MCF 10A (cell line): ENCODE measurements at regions of chr10 and their contacts with region 1.

Region 1: DNA sequence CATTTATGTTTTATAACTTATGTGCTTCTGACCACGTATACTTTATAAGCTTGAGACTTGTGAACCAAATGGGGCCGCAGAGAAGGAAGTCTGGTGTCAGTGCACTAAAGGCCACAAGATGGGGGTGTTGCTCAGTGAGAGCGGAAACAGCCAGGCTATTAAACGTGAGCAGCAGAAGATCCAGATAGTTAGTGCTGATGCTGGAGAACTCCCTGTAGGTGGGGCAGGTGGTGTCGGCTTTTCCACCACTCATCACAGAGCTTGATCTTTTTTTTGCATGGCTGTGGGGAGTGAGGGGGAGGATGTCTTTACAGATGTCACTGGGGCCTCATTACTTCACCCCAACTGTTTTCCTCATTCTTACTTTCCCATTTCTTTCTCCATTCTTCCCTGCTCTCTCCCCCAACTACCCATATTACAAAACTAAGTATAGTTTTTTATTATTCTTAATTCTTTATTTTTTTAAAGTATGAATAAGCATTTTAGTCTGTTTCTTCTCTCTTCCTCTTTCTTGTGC is 34.7 kb downstream of the ACADSB start:
- DNase-seq: peak; percentile 79
- H3K4me3 Mint-ChIP-seq: no peak overlapping the region
- H3K27ac Mint-ChIP-seq: no peak overlapping the region
- H3K4me1 Mint-ChIP-seq: no peaks in the 10 kb centered on the region
- H3K27me3 Mint-ChIP-seq: no peaks in the 10 kb centered on the region
- CTCF ChIP-seq: peak; percentile 86

Region 2: DNA sequence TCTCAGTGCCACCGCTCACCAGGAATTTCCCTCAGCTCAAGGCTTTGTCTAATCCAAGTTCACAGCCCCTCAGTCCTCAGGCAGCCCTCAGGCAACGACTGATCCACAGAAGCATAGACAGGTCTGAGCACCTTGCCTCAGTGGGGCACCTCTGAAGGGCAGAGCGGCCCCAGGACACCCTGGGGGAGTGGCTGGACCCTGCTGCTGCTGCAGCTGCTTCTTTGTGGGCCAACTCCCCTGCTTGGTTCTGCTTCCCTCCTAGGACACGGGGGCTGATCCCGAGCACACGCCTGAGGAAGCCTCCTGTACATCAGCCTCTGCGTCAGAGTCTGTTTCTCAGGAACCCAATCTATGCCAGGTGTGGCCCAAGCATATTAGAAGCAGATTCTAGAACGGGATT is 214.0 kb before region 1 on chr10:
- CTCF ChIA-PET with region 1: no interaction called
- POLR2A ChIA-PET with region 1: no interaction called
- intact Hi-C with region 1: no loop called
- DNase-seq: no peak
- H3K4me3 Mint-ChIP-seq: no peak overlapping the region
- H3K27ac Mint-ChIP-seq: no peak overlapping the region
- H3K4me1 Mint-ChIP-seq: no peaks in the 10 kb centered on the region
- H3K27me3 Mint-ChIP-seq: peaks cover 45% of the 10 kb centered on the region
- CTCF ChIP-seq: no peak

Region 3: DNA sequence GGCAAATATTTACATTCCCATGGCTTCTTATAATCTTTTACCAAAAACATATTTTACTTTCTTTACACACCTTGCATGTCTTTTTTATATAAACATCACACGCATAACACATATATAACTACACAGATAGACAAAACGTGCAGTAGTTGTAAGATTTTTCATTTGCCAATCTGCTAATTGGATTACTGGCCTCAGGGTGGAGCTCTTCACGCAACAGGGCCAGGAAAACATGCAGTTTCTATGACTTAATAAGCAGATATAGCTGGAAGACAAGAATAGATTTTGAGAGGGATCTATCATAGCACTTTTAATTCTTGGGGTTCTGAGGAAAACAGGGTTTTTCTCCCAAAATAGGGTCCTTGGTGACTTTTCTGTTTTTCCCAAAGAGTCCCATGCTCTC is 21.9 kb before region 1 on chr10:
- CTCF ChIA-PET with region 1: interaction called, 18 read pairs
- POLR2A ChIA-PET with region 1: interaction called, 6 read pairs
- intact Hi-C with region 1: no loop called
- DNase-seq: peak; percentile 23
- H3K4me3 Mint-ChIP-seq: no peak overlapping the region
- H3K27ac Mint-ChIP-seq: no peak overlapping the region
- H3K4me1 Mint-ChIP-seq: peaks cover 7% of the 10 kb centered on the region
- H3K27me3 Mint-ChIP-seq: no peaks in the 10 kb centered on the region
- CTCF ChIP-seq: peak; percentile 28

Region 4: DNA sequence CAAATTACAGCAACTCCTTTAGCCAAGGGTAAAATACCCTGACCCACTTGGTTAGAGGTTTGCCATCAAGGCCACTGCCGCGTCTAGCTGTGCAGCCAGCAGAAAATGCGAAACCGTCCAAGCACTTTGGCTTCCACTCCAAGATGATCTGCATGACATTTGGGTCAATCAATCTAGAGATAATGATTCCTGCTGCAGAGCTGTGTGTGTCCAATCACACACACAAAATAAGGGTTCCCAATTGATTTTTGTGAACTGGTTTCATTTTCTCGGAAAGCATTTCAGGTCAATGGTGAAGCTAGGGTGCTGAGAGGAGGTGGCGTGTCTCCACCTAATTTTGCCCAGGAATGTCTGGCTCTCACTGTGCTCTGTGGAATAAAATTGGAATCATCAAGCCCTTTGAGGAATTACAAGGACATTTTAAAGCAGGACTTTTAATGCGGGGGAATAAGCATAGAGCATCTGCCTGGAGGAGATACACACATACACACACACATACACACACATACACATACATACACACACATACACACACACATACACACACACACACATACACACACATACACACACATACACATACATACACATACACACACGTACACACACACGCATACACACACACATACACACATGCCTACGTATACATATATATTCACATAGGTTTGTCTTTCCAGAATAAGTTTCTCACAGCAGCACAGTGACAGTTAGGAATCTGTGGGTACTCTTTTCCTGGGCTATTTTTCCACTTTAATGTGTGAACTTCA is 24.8 kb after region 1 on chr10:
- CTCF ChIA-PET with region 1: interaction called, 13 read pairs
- POLR2A ChIA-PET with region 1: interaction called, 3 read pairs
- intact Hi-C with region 1: no loop called
- DNase-seq: no peak
- H3K4me3 Mint-ChIP-seq: no peak overlapping the region
- H3K27ac Mint-ChIP-seq: no peak overlapping the region
- H3K4me1 Mint-ChIP-seq: no peaks in the 10 kb centered on the region
- H3K27me3 Mint-ChIP-seq: peaks cover 28% of the 10 kb centered on the region
- CTCF ChIP-seq: no peak

Region 5: GRCh38 chr10:123380497-123381085 is 337.1 kb after region 1 on chr10:
- CTCF ChIA-PET with region 1: interaction called, 51 read pairs
- POLR2A ChIA-PET with region 1: interaction called, 10 read pairs
- intact Hi-C with region 1: loop called (anchors 1 kb)
- DNase-seq: peak; percentile 33
- H3K4me3 Mint-ChIP-seq: no peak overlapping the region
- H3K27ac Mint-ChIP-seq: no peak overlapping the region
- H3K4me1 Mint-ChIP-seq: peaks cover 18% of the 10 kb centered on the region
- H3K27me3 Mint-ChIP-seq: no peaks in the 10 kb centered on the region
- CTCF ChIP-seq: peak; percentile 41

Region 6: GRCh38 chr10:123537188-123537961 is 493.9 kb after region 1 on chr10:
- CTCF ChIA-PET with region 1: interaction called, 10 read pairs
- POLR2A ChIA-PET with region 1: no interaction called
- intact Hi-C with region 1: no loop called
- DNase-seq: no peak
- H3K4me3 Mint-ChIP-seq: no peak overlapping the region
- H3K27ac Mint-ChIP-seq: peak overlapping the region; percentile 84
- H3K4me1 Mint-ChIP-seq: peaks cover 14% of the 10 kb centered on the region
- H3K27me3 Mint-ChIP-seq: no peaks in the 10 kb centered on the region
- CTCF ChIP-seq: no peak

Region 7: GRCh38 chr10:123967396-123968243 is 924.2 kb after region 1 on chr10:
- CTCF ChIA-PET with region 1: no interaction called
- POLR2A ChIA-PET with region 1: no interaction called
- intact Hi-C with region 1: loop called (anchors 5 kb)
- DNase-seq: peak; percentile 68
- H3K4me3 Mint-ChIP-seq: no peak overlapping the region
- H3K27ac Mint-ChIP-seq: no peak overlapping the region
- H3K4me1 Mint-ChIP-seq: no peaks in the 10 kb centered on the region
- H3K27me3 Mint-ChIP-seq: peaks cover 87% of the 10 kb centered on the region
- CTCF ChIP-seq: peak; percentile 92